Dorsolateral prefrontal cortex (tissue), 120 donors: ENCODE measurements at regions of chr14 and their contacts with region 1.

Region 1: GRCh38 chr14:23469127-23469905 is at the start of gene NGDN:
- DNase-seq: peak; percentile 96 to 100 (median 97)
- H3K4me3 ChIP-seq: peak within 1 kb of the TSS; percentile 62 to 100 (median 93)
- H3K27ac ChIP-seq: peak within 1 kb of the TSS; percentile 72 to 99 (median 95)
- H3K27me3 ChIP-seq: no peaks in the 10 kb centered on the region
- CTCF ChIP-seq: peak; percentile 67 to 97 (median 89)
- total RNA-seq, gene NGDN: 23.4 to 51.0 (median 37.9) TPM

Region 2: DNA sequence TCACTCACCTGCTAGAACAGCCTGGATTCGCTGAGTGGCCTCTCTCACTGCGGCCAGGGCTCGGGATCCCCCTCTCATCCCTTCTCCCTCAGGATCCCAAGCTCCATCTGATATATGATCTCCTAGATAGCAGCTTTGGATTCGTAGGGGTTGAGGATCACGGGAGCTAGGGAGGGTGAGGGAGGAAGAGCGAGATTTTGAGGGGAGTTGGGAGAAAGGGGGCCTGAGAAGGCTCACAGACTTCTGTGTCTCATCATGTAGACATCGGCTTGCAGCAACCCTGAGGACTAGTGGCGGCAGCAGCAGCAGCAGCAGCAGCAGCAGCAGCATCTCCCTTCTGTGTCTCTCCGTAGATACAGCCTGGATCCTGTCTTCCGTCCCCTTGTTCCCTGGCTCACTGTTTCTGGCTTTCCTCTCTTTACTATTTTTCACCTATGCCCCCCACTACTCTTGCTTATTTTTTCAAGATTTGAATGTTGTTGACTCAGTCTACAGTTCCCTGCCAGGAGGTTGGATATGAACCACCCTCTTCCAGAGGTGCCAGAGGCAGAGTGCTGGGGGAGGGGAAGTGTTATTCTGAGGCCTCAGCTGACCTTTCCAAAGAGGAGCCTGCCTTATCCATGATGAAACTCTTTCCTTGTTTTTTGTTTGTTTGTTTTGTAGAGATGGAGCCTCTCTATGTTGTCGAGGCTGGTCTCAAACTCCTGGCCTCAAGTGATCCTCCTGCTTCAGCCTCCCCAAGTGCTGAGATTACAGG is 364.5 kb before region 1 on chr14 and contains the start of gene CIROP:
- intact Hi-C with region 1: loop called in 1 of 2 experiments (anchors 10 kb)
- DNase-seq: no peak
- H3K4me3 ChIP-seq: peak within 1 kb of the TSS in 18 of 59 donors; percentile 1 to 44 (median 20)
- H3K27ac ChIP-seq: peak within 1 kb of the TSS in 21 of 59 donors; percentile 10 to 73 (median 44)
- H3K27me3 ChIP-seq: no peaks in the 10 kb centered on the region
- CTCF ChIP-seq: peak in 1 of 56 donors; percentile 7
- total RNA-seq, gene CIROP: 0.18 to 1.9 (median 0.40) TPM in 73 of 120 experiments, not detected in the others

Region 3: GRCh38 chr14:23269193-23269592 is 200.1 kb before region 1 on chr14:
- intact Hi-C with region 1: loop called in 1 of 2 experiments (anchors 5 kb)
- DNase-seq: no peak
- H3K4me3 ChIP-seq: no peak overlapping the region
- H3K27ac ChIP-seq: no peak overlapping the region
- H3K27me3 ChIP-seq: no peaks in the 10 kb centered on the region
- CTCF ChIP-seq: no peak

Region 4: DNA sequence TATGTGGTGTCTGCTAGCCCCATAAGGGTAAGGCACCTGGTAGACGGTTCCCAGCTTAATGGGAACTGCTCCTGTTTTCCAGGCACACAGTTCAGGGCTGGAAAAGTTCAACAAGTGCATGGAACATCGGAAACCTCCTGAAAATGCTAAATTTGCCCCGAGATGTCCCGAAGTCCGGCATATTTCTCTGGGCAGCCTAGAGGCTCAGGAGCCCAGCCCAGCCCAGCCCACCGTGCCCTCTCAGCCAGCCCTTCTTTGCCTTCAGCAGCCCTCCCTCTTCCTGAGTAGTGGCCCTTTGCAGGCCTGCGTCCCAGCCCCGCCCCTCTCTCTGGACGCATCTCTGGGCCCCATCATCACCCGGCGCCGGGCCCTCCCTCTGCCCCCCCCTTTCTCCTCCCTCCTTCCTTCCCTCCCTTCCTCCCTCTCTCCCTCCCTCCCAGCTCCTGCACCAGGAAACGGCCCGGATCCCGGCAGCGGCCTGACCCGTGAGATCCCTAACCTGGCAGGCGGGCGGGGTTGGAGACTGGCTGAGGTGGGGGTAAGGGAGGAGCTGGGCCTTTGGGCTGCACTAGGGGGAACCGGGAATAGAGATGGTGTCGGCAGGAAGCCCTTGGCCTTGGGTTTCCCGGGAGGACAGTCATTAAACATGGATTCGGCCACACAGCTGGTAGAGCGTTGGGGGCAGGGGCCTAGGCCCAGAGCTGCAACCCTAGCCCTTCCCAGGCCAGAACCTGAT is 162.7 kb before region 1 on chr14 and contains the start of gene BCL2L2:
- intact Hi-C with region 1: loop called in 1 of 2 experiments (anchors 5 kb)
- DNase-seq: peak; percentile 87 to 92 (median 89)
- H3K4me3 ChIP-seq: peak within 1 kb of the TSS; percentile 58 to 99 (median 88)
- H3K27ac ChIP-seq: peak within 1 kb of the TSS; percentile 66 to 98 (median 93)
- H3K27me3 ChIP-seq: no peaks in the 10 kb centered on the region
- CTCF ChIP-seq: peak in 9 of 56 donors; percentile 19 to 38 (median 31)
- total RNA-seq, gene BCL2L2: 91.0 to 167 (median 129) TPM

Region 5: DNA sequence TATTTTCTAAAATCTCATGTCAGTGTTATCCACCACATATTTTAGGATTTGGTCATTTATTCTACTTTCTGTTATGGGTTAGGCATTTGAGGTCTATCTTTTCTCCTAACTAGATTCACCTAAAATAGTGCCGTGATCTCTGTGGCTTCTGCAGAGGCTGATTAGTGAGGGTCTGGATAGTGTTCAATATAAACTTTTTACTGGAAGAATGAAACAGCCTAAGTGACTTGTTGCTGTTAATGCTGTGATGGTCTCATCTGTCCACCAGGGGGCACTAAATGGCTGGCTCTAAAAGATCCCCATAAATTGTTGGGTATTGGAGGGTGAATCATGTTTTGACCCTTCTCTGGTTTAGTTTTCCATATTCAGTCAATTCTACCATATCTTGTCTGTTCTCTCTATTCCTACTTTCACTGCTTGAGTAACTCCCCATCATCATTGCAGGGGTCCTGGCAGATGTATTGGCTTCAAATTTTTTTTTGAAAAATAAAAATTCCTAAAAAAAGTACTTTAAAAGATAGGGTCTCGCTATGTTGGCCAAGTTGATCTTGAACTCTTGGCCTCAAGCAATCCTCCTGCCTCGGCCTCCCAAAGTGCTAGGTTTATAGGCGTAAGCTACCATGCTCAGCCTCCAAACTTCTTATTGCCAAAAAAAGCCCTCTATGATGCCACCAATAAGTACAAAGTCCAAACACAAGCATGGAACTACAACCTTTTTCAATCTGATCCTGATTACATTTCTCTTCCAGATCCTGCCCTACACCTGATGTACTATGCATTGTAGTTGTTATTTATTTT is 141.2 kb before region 1 on chr14:
- intact Hi-C with region 1: loop called (anchors 5 kb)
- DNase-seq: peak in 7 of 10 donors; percentile 59 to 88 (median 74)
- H3K4me3 ChIP-seq: peak overlapping the region in 1 of 59 donors; percentile 1
- H3K27ac ChIP-seq: peak overlapping the region in 20 of 59 donors; percentile 5 to 70 (median 36)
- H3K27me3 ChIP-seq: no peaks in the 10 kb centered on the region
- CTCF ChIP-seq: peak; percentile 85 to 99 (median 94)

Region 6: GRCh38 chr14:23352511-23353432 is 116.5 kb before region 1 on chr14 and contains the start of gene SLC22A17:
- intact Hi-C with region 1: loop called in 1 of 2 experiments (anchors 10 kb)
- DNase-seq: peak; percentile 83 to 96 (median 92)
- H3K4me3 ChIP-seq: peak within 1 kb of the TSS; percentile 56 to 95 (median 87)
- H3K27ac ChIP-seq: peak within 1 kb of the TSS; percentile 66 to 98 (median 94)
- H3K27me3 ChIP-seq: no peaks in the 10 kb centered on the region
- CTCF ChIP-seq: peak in 32 of 56 donors; percentile 3 to 45 (median 24)
- total RNA-seq, gene SLC22A17: 238 to 610 (median 461) TPM

Region 7: GRCh38 chr14:23665375-23666192 is 196.3 kb after region 1 on chr14:
- intact Hi-C with region 1: no loop called
- DNase-seq: peak in 2 of 10 donors; percentile 13 to 19
- H3K4me3 ChIP-seq: no peak overlapping the region
- H3K27ac ChIP-seq: no peak overlapping the region
- H3K27me3 ChIP-seq: peaks cover 0 to 4% (median 0%) of the 10 kb centered on the region in 45 donors
- CTCF ChIP-seq: peak in 37 of 56 donors; percentile 11 to 56 (median 32)